IMR-90 (cell line): ENCODE measurements at regions of chr6 and their contacts with region 1.

Region 1: GRCh38 chr6:161233984-161234661 is 39.7 kb downstream of the AGPAT4 start:
- DNase-seq: peak; percentile 94
- ATAC-seq: peak; percentile 87
- H3K4me3 ChIP-seq: no peak overlapping the region
- H3K27ac ChIP-seq: peak overlapping the region; percentile 24; the same call in 1 of the 2 replicates
- H3K4me1 ChIP-seq: peaks cover 13% of the 10 kb centered on the region
- H3K27me3 ChIP-seq: no peaks in the 10 kb centered on the region
- CTCF ChIP-seq: no peak
- POLR2A ChIP-seq: no peak
- RAD21 ChIP-seq: no peak

Region 2: DNA sequence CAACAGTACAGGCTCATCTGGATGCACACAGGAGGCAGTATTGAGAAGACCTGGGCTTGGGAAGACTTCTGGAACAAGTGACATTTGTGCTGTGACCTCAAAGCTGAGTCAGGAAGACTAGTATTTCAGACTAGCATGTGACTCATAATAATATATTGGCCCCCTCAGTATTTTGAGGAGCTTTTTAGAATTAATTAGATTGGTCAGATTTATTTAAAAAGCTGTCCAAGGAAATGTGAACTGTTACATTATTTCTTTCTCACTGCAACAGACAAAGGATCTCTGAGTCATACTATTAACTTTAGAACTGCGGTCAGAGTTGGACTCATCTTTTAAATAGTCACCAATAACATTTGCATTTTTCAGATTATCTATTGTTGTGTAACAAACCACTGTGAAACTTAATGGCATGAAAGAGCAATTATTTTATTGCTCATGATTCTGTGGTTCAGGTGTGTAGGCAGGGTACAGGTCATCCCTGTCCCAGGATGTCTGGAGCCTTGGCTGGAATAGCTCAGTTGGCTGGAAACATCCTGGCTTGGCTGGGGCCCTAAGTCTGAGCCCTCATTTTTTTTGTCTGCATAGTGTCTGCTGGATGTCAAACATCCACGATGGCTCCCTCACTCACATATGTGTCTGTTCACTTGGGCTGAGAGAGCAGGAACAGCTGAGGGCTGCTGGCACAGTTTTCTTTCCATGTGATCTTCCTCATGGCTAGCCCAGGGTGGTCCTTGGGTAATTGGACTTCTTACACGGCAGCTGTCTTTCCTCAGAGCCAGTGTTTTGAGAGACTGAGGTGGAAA is 195.7 kb before region 1 on chr6:
- CTCF ChIA-PET with region 1: no interaction called
- POLR2A ChIA-PET with region 1: no interaction called
- dilution Hi-C with region 1: no loop called
- in situ Hi-C with region 1: no loop called
- intact Hi-C with region 1: loop called (anchors 10 kb)
- DNase-seq: peak; percentile 96
- ATAC-seq: peak; percentile 82
- H3K4me3 ChIP-seq: no peak overlapping the region
- H3K27ac ChIP-seq: peak overlapping the region; percentile 15
- H3K4me1 ChIP-seq: peaks cover 10% of the 10 kb centered on the region
- H3K27me3 ChIP-seq: no peaks in the 10 kb centered on the region
- CTCF ChIP-seq: peak; percentile 32
- POLR2A ChIP-seq: no peak
- RAD21 ChIP-seq: peak; percentile 40

Region 3: DNA sequence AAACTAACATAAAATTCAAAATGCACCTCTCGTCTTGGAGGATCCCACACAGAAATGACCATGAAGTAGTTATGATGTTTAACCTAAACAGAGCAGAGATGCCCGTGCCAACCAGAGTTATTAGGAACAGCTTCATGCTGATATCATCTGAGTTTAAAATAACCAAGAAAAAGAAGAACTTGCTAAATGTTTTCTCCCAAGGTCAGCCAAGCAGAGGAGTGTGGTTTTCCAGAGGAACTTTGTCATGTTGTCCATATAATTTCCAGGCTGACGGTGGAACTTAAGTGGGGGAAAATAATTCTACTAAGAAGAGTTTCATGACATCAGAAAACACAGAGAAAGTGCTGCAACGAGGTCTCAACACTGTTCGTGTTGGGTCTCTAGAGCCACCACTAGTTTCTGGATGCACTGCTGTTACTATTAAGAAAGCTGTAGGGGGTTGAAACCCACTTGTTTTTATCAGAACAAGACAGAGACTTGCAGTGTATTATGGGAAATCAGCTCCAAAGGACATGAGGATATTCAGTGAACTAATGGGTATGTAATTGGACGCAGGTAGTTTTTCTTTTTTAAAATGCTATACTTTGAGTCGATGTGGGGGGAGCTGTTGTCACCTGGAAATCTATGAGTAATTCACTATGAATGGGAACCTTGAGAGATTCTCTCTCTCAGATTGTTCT is 34.5 kb after region 1 on chr6:
- CTCF ChIA-PET with region 1: no interaction called
- POLR2A ChIA-PET with region 1: no interaction called
- dilution Hi-C with region 1: no loop called
- in situ Hi-C with region 1: no loop called
- intact Hi-C with region 1: no loop called
- DNase-seq: no peak
- ATAC-seq: no peak
- H3K4me3 ChIP-seq: no peak overlapping the region
- H3K27ac ChIP-seq: no peak overlapping the region
- H3K4me1 ChIP-seq: peaks cover 1% of the 10 kb centered on the region
- H3K27me3 ChIP-seq: no peaks in the 10 kb centered on the region
- CTCF ChIP-seq: no peak
- POLR2A ChIP-seq: no peak
- RAD21 ChIP-seq: no peak